Heart right ventricle (tissue), 16 donors: ENCODE measurements at regions of chr11 and their contacts with region 1.

Region 1: GRCh38 chr11:129364143-129364654 is 11.4 kb upstream of the BARX2 start:
- DNase-seq: peak; percentile 69 to 72
- ATAC-seq: peak; percentile 71 to 98 (median 92)
- H3K4me3 ChIP-seq: no peak overlapping the region
- H3K27ac ChIP-seq: no peak overlapping the region
- H3K4me1 ChIP-seq: peaks cover 0 to 8% (median 0%) of the 10 kb centered on the region in 9 donors
- H3K27me3 ChIP-seq: peaks cover 0 to 88% (median 75%) of the 10 kb centered on the region in 7 donors
- CTCF ChIP-seq: peak; percentile 85 to 99 (median 96)

Region 2: GRCh38 chr11:129315781-129316481 is 48.3 kb before region 1 on chr11:
- intact Hi-C with region 1: no loop called
- DNase-seq: no peak
- ATAC-seq: no peak
- H3K4me3 ChIP-seq: no peak overlapping the region
- H3K27ac ChIP-seq: no peak overlapping the region
- H3K4me1 ChIP-seq: peaks cover 0 to 32% (median 18%) of the 10 kb centered on the region in 9 donors
- H3K27me3 ChIP-seq: peaks cover 0 to 6% (median 0%) of the 10 kb centered on the region in 7 donors
- CTCF ChIP-seq: no peak

Region 3: GRCh38 chr11:129695575-129696308 is 331.5 kb after region 1 on chr11:
- intact Hi-C with region 1: loop called in 2 of 10 experiments (anchors 5 to 10 kb)
- DNase-seq: peak; percentile 23 to 24
- ATAC-seq: peak; percentile 50 to 83 (median 76)
- H3K4me3 ChIP-seq: peak overlapping the region in 8 of 10 donors; percentile 12 to 44 (median 36)
- H3K27ac ChIP-seq: no peak overlapping the region
- H3K4me1 ChIP-seq: peaks cover 0 to 8% (median 6%) of the 10 kb centered on the region in 9 donors
- H3K27me3 ChIP-seq: peaks cover 0 to 34% (median 18%) of the 10 kb centered on the region in 7 donors
- CTCF ChIP-seq: peak; percentile 23 to 77 (median 61)